Ovary (tissue), 10 donors: ENCODE measurements at regions of chr7 and their contacts with region 1.

Region 1: GRCh38 chr7:100586266-100587025 is at the start of gene FBXO24:
- DNase-seq: peak; percentile 99 to 100 (median 99)
- H3K4me3 ChIP-seq: peak within 1 kb of the TSS; percentile 83
- H3K27ac ChIP-seq: peak within 1 kb of the TSS; percentile 65 to 86
- H3K4me1 ChIP-seq: peaks cover 14% of the 10 kb centered on the region
- H3K27me3 ChIP-seq: no peaks in the 10 kb centered on the region
- CTCF ChIP-seq: no peak
- EP300 ChIP-seq: no peak
- POLR2A ChIP-seq: no peak
- total RNA-seq, gene FBXO24: 0.34 to 2.2 (median 0.84) TPM

Region 2: DNA sequence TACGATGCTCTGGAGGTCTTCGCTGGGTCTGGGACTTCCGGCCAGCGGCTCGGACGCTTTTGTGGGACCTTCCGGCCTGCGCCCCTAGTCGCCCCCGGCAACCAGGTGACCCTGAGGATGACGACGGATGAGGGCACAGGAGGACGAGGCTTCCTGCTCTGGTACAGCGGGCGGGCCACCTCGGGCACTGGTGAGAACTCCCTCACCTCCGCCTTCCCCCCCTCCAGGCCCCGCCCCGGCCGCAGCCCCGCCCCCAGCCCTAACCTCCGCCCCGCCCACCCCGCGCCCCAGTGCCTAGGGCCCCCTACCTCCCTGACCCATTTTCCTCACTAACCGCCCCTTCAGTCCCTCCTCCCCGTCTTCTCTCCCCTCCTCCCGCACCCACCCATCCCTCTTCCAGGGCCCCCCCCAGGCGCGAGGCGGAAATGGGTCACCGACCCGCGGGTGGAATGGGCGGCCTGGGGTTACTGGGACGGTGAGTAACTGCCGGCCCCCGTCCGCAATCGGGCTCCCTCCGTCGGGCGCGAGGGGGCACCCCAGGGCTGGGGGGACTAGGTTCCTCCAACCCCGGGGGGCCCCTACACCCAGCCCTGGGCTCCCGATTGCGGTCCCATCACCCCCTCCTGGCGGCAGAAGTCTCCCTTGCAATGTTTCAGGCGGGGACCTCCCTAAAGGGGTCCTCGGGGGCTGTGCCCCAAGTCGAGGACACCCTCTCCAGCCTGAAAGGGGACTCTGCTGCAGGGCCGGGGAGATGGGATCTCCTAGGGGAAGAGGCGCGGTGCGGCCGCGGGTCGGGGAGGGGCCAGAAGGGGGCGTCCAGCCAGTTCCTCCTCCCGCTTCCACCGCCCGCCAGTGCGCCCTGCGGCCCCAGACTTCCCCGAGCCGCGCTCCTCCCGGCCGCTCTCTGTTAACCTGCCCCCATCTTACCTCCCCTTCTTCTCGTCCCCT is 17.9 kb after region 1 on chr7:
- intact Hi-C with region 1: loop called in 1 of 4 experiments (anchors 2 kb)
- DNase-seq: peak; percentile 79 to 88 (median 85)
- H3K4me3 ChIP-seq: peak overlapping the region; percentile 75
- H3K27ac ChIP-seq: peak overlapping the region; percentile 83 to 86
- H3K4me1 ChIP-seq: peaks cover 19% of the 10 kb centered on the region
- H3K27me3 ChIP-seq: no peaks in the 10 kb centered on the region
- CTCF ChIP-seq: peak in 2 of 3 donors; percentile 39 to 76
- EP300 ChIP-seq: no peak
- POLR2A ChIP-seq: peak; percentile 81

Region 3: GRCh38 chr7:100611974-100612729 is 25.7 kb after region 1 on chr7 and contains the start of gene MOSPD3:
- intact Hi-C with region 1: loop called in 1 of 4 experiments (anchors 2 kb)
- DNase-seq: peak; percentile 99 to 100 (median 99)
- H3K4me3 ChIP-seq: peak within 1 kb of the TSS; percentile 48
- H3K27ac ChIP-seq: peak within 1 kb of the TSS; percentile 25 to 87
- H3K4me1 ChIP-seq: peaks cover 6% of the 10 kb centered on the region
- H3K27me3 ChIP-seq: no peaks in the 10 kb centered on the region
- CTCF ChIP-seq: no peak
- EP300 ChIP-seq: peak; percentile 86
- POLR2A ChIP-seq: peak; percentile 58
- total RNA-seq, gene MOSPD3: 9.4 to 27.7 (median 24.7) TPM

Region 4: DNA sequence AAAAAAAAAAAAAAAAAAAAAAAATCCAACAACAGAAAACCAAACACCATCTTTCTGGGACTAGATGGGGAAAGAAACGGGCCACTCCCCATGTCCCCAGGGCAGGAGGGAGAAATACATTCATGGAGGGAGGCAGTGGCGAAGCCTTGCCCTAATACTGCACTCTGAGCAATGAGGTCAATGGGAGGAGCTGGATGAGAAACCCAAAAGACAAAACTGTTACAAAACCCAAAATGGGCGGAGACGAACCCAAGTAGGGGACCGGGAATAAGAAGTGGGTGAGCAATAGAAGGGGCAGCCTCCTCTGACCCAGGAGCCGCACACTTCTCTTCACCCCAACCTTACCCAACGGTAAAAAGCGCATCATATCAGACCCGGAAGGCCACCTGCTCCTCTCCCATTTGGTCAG is 93.7 kb after region 1 on chr7:
- intact Hi-C with region 1: loop called in 1 of 4 experiments (anchors 5 kb)
- DNase-seq: peak in 3 of 5 donors; percentile 34 to 70 (median 53)
- H3K4me3 ChIP-seq: no peak overlapping the region
- H3K27ac ChIP-seq: no peak overlapping the region
- H3K4me1 ChIP-seq: peaks cover 1% of the 10 kb centered on the region
- H3K27me3 ChIP-seq: no peaks in the 10 kb centered on the region
- CTCF ChIP-seq: no peak
- EP300 ChIP-seq: no peak
- POLR2A ChIP-seq: no peak

Region 5: DNA sequence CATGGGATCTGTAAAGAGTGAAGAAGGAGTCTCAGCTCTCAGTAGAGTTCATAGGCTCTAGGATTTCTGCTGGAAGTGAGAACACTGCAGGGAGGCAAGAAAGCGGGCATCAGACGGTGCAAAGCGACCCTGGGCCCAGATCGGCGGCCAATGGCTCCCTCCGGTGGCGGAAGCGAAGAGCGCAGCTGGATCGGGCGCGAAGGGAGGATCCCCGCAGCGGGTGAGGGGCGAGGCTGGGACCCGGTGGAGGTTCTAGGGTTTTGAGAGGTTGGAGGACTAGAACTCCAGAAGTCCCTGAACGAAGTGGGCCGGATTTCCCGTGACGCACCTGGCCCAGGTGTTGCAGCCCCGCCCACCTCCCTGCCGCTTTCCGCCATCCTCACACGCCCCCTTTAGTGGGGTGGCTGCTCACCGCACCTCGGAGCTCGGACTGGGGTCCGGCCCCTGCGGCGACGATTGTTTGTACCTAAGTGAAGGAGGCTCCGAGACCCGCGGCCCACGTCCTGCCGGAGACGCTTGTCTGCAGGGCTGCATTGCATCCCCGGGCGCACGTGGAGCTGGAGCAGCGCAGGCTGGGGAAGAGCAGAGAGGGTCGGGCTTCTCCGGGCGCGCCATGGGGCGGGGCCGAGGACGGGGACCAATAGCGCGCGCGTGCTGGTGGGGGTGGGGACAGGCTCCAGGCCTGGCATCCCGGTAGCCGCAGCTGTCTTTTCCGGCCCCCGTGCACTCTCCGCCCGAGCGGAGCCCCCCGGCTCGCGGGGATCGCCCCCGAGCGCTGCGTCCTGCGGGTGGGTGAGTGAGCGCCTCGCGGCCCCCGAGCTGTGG is 265.8 kb after region 1 on chr7 and contains the start of gene SLC12A9:
- intact Hi-C with region 1: loop called in 1 of 4 experiments (anchors 10 kb)
- DNase-seq: peak; percentile 87 to 93 (median 90)
- H3K4me3 ChIP-seq: peak within 1 kb of the TSS; percentile 48
- H3K27ac ChIP-seq: peak within 1 kb of the TSS in 1 of 2 donors; percentile 66
- H3K4me1 ChIP-seq: no peaks in the 10 kb centered on the region
- H3K27me3 ChIP-seq: no peaks in the 10 kb centered on the region
- CTCF ChIP-seq: peak; percentile 94 to 95 (median 94)
- EP300 ChIP-seq: no peak
- POLR2A ChIP-seq: no peak
- total RNA-seq, gene SLC12A9: 10.1 to 31.8 (median 26.9) TPM